ENCODE measurements at regions of chr15 and their contacts with region 1.

Region 1: GRCh38 chr15:42920519-42921227 is at the start of gene TTBK2:
- DNase-seq: peak; percentile 98 to 99
- ATAC-seq: peak; percentile 97 to 99 (median 98)
- H3K4me3 ChIP-seq: peak within 1 kb of the TSS; percentile 76
- H3K27ac ChIP-seq: peak within 1 kb of the TSS; percentile 78
- H3K4me1 ChIP-seq: peaks cover 14% of the 10 kb centered on the region
- H3K27me3 ChIP-seq: no peaks in the 10 kb centered on the region
- CTCF ChIP-seq: peak; percentile 8
- total RNA-seq, gene TTBK2: 15.8 to 23.0 (median 20.8) TPM

Region 2: GRCh38 chr15:42736793-42737528 is 183.7 kb before region 1 on chr15 and contains the start of gene CDAN1:
- intact Hi-C with region 1: loop called (anchors 10 kb)
- DNase-seq: peak; percentile 95 to 97
- ATAC-seq: peak; percentile 97 to 98 (median 98)
- H3K4me3 ChIP-seq: peak within 1 kb of the TSS; percentile 84
- H3K27ac ChIP-seq: peak within 1 kb of the TSS; percentile 92
- H3K4me1 ChIP-seq: peaks cover 10% of the 10 kb centered on the region
- H3K27me3 ChIP-seq: no peaks in the 10 kb centered on the region
- CTCF ChIP-seq: no peak
- total RNA-seq, gene CDAN1: 3.7 to 7.9 (median 5.2) TPM

Region 3: GRCh38 chr15:42858540-42858939 is 62.1 kb before region 1 on chr15:
- intact Hi-C with region 1: loop called in 1 of 2 experiments (anchors 5 kb)
- DNase-seq: no peak
- ATAC-seq: peak in 1 of 4 donors; percentile 54
- H3K4me3 ChIP-seq: no peak overlapping the region
- H3K27ac ChIP-seq: no peak overlapping the region
- H3K4me1 ChIP-seq: peaks cover 19% of the 10 kb centered on the region
- H3K27me3 ChIP-seq: no peaks in the 10 kb centered on the region
- CTCF ChIP-seq: no peak

Region 4: DNA sequence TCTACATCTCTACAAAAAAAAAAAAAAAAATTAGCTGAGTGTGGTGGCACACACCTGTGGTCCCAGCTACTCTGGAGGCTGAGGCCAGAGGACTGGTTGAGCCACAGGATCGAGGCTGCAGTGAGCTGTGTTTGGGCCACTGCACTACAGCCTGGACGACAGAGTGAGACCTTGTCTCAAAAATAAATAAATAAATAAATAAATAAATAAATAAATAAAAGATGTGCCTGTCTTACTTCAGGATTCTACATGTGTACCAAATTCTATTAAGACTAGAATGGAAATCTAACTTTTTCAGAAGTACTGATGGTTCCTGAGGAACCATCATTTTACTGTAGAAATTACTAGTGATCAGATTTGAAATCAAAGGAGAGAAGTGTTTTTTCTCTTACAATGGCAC is 52.0 kb before region 1 on chr15:
- intact Hi-C with region 1: no loop called
- DNase-seq: no peak
- ATAC-seq: no peak
- H3K4me3 ChIP-seq: no peak overlapping the region
- H3K27ac ChIP-seq: no peak overlapping the region
- H3K4me1 ChIP-seq: peaks cover 4% of the 10 kb centered on the region
- H3K27me3 ChIP-seq: no peaks in the 10 kb centered on the region
- CTCF ChIP-seq: no peak

Region 5: GRCh38 chr15:43255376-43255775 is 334.7 kb after region 1 on chr15:
- intact Hi-C with region 1: no loop called
- DNase-seq: no peak
- ATAC-seq: no peak
- H3K4me3 ChIP-seq: no peak overlapping the region
- H3K27ac ChIP-seq: no peak overlapping the region
- H3K4me1 ChIP-seq: no peaks in the 10 kb centered on the region
- H3K27me3 ChIP-seq: no peaks in the 10 kb centered on the region
- CTCF ChIP-seq: no peak

Measured in psoas muscle (tissue), 8 donors.